MCF 10A (cell line): ENCODE measurements at regions of chr6 and their contacts with region 1.

Region 1: DNA sequence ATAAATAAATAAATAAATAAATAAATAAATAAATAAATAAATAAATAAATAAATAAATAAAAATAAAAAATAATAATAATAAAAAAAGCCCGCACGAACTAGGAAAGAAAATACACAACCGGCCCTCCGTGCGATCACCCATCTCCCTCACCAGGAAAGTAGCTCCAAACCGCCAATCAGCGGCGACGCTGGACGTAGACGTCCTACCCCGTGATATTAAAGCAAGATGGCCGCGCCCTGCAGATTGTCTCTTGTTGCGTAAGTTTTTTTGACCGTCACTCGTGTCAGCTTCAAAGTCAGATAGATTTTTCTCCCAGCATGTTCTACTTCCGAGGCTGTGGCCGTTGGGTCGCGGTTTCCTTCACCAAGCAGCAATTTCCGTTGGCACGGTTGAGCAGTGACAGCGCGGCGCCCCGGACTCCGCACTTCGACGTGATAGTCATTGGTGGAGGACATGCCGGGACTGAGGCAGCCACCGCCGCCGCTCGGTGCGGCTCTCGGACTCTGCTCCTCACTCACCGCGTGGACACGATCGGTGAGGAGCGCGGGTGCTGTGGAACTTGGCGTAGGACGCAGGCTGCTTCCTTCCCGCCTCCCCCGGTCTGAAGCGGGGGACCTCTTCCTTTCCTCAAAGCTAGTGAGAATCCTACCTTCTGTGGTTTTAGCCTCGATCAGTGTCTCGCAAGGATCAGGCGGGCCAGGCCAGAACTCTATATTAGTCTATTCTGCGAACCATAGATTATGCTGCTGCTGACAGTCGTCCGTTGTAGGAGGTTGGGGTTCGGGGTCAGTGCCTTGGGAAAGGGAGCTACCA is at the start of gene MTO1:
- DNase-seq: peak; percentile 94
- H3K4me3 Mint-ChIP-seq: peak within 1 kb of the TSS; percentile 88
- H3K27ac Mint-ChIP-seq: peak within 1 kb of the TSS; percentile 95
- H3K4me1 Mint-ChIP-seq: peaks cover 6% of the 10 kb centered on the region
- H3K27me3 Mint-ChIP-seq: no peaks in the 10 kb centered on the region
- CTCF ChIP-seq: no peak
- total RNA-seq, gene MTO1: 50.8 and 51.4 TPM in 2 replicates

Region 2: GRCh38 chr6:73017476-73017875 is 444.3 kb before region 1 on chr6:
- CTCF ChIA-PET with region 1: no interaction called
- POLR2A ChIA-PET with region 1: no interaction called
- intact Hi-C with region 1: no loop called
- DNase-seq: no peak
- H3K4me3 Mint-ChIP-seq: no peak overlapping the region
- H3K27ac Mint-ChIP-seq: no peak overlapping the region
- H3K4me1 Mint-ChIP-seq: no peaks in the 10 kb centered on the region
- H3K27me3 Mint-ChIP-seq: no peaks in the 10 kb centered on the region
- CTCF ChIP-seq: no peak

Region 3: GRCh38 chr6:73200735-73201134 is 261.0 kb before region 1 on chr6:
- CTCF ChIA-PET with region 1: no interaction called
- POLR2A ChIA-PET with region 1: no interaction called
- intact Hi-C with region 1: no loop called
- DNase-seq: no peak
- H3K4me3 Mint-ChIP-seq: no peak overlapping the region
- H3K27ac Mint-ChIP-seq: no peak overlapping the region
- H3K4me1 Mint-ChIP-seq: peaks cover 6% of the 10 kb centered on the region
- H3K27me3 Mint-ChIP-seq: no peaks in the 10 kb centered on the region
- CTCF ChIP-seq: no peak

Region 4: DNA sequence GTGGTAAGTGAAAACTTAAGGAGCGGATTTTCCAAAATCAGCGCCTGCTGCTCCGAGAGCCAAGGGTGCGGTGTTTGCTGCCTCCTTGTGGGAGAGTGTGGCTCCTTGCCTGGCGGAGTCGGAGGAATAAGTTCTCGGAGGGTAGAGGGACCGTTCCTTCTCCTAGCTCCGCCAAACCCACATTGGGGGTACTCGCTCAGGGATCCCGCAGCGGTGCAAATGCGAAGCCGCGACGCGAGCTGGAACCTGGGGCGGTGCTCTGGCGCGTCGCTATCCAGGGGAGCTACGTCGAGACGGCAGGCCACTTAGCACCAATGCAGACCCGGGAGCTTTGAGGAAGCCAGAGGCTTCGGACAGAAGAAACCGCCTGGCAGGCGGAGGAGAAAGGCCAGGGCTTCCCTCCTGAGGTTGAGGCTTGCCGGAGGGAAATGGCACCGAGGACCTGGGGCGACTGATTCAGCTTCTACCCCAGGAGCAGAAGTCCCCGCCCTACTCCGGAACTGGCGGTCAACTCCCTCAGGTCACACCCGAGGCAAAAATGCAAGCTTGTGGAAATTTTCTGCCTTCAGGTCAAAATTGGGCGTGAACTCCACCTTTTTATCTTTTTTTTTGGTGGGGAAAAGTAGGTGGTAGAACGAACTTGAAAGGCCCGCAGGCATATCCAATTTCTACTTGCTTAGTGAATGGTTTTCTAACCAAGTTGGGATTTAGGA is 72.8 kb before region 1 on chr6:
- CTCF ChIA-PET with region 1: interaction called, 8 read pairs
- POLR2A ChIA-PET with region 1: interaction called, 16 read pairs
- intact Hi-C with region 1: no loop called
- DNase-seq: peak; percentile 74
- H3K4me3 Mint-ChIP-seq: peak overlapping the region; percentile 83
- H3K27ac Mint-ChIP-seq: peak overlapping the region; percentile 51
- H3K4me1 Mint-ChIP-seq: no peaks in the 10 kb centered on the region
- H3K27me3 Mint-ChIP-seq: no peaks in the 10 kb centered on the region
- CTCF ChIP-seq: peak; percentile 77

Region 5: GRCh38 chr6:73471686-73472290 is 10.0 kb after region 1 on chr6:
- CTCF ChIA-PET with region 1: interaction called, 9 read pairs
- POLR2A ChIA-PET with region 1: interaction called, 27 read pairs
- intact Hi-C with region 1: no loop called
- DNase-seq: no peak
- H3K4me3 Mint-ChIP-seq: no peak overlapping the region
- H3K27ac Mint-ChIP-seq: no peak overlapping the region
- H3K4me1 Mint-ChIP-seq: no peaks in the 10 kb centered on the region
- H3K27me3 Mint-ChIP-seq: no peaks in the 10 kb centered on the region
- CTCF ChIP-seq: no peak

Region 6: DNA sequence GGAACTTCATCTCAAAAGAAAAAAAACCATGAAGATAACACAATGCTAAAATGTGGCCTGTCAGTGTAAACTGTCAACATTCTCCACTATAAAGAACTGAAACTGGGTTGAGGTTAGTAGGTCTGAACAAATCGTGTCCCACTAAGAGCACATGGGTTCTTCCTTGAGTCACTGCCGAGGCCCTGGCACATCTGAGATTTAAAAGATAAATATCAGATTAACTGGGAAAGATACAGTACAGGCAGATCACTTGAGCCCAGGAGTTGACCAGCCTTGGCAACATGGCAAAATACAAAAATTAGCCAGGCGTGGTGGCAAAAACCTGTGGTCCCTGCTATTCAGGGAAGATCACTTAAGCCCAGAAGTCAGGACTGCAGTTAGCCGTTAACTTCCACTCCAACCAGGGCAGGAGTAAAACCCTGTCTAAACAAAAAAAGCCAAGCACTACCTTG is 53.5 kb after region 1 on chr6:
- CTCF ChIA-PET with region 1: interaction called, 7 read pairs
- POLR2A ChIA-PET with region 1: interaction called, 53 read pairs
- intact Hi-C with region 1: no loop called
- DNase-seq: peak; percentile 32
- H3K4me3 Mint-ChIP-seq: no peak overlapping the region
- H3K27ac Mint-ChIP-seq: peak overlapping the region; percentile 35
- H3K4me1 Mint-ChIP-seq: peaks cover 12% of the 10 kb centered on the region
- H3K27me3 Mint-ChIP-seq: no peaks in the 10 kb centered on the region
- CTCF ChIP-seq: no peak

Region 7: DNA sequence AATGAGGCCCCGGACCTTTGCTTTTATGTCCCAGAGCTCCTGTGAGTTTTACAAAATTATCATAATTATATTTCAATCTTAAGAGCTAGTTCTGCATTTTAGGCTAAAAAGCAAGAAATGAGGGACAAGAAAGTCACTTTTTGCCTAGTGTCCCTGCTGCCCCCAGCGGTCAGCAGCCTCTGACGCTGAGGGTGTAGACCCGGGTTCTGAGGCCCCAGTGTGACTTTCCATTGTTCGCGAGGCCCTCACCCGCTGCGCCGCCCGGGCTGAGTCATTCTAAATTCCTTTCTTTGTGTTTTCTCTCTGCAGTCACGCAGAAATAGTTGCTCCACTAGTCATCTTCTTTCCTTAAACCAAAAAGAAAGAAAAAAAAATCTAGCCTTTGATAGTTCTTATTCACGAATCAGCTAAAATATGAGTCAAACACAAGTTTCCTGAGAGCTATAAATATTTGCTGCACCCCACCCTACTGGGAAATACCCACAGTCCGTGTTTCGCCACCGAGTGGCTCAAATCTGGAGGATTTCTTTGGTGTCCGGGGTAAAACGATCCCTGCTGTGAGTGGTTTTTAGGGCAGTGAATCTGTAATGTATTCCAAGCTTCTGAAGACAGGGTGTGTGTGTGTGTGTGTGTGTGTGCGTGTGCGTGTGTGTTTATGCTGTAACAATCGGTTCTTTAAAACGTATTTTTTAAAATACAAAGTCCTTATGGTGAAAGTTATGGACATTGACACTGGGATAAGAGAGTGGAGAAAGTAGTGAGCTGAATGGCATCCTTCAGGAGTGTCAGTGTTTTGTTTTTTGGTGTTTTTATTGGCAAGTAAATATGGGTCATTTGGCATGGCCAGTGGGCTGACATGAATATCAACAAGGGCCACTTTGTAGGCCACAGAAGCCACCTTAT is 118.8 kb after region 1 on chr6:
- CTCF ChIA-PET with region 1: no interaction called
- POLR2A ChIA-PET with region 1: interaction called, 10 read pairs
- intact Hi-C with region 1: no loop called
- DNase-seq: peak; percentile 94
- H3K4me3 Mint-ChIP-seq: peak overlapping the region; percentile 81
- H3K27ac Mint-ChIP-seq: peak overlapping the region; percentile 100
- H3K4me1 Mint-ChIP-seq: peaks cover 9% of the 10 kb centered on the region
- H3K27me3 Mint-ChIP-seq: no peaks in the 10 kb centered on the region
- CTCF ChIP-seq: peak; percentile 17

Region 8: DNA sequence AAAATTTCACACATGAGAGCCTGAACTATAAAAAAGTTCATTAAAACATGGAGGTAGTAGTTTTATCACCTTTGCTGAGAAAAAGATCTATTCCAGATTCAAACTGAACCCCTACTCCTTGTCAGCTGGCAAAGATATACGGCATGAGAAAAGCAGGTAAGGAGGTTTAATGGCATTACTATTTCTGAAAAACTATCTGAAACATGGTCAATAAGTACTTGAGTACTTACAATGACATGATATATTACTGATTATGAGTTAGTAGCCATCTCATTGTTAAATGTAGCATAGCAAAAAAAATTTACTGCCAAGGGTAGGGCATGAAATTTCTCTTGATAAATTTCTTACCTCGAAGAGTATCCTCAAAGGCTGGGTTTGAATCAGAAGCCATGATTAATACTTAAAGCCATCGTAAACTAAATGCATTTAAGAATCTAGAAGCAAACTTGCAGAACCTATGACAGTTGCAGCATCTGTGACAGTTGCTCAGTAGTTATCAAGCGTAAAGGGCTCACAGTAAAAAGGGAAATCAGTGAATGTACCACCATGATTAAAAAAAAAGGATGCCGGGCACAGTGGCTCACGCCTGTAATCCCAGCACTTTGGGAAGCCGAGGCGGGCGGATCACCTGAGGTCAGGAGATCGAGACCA is 183.3 kb after region 1 on chr6:
- CTCF ChIA-PET with region 1: no interaction called
- POLR2A ChIA-PET with region 1: interaction called, 14 read pairs
- intact Hi-C with region 1: no loop called
- DNase-seq: no peak
- H3K4me3 Mint-ChIP-seq: peak overlapping the region; percentile 79
- H3K27ac Mint-ChIP-seq: peak overlapping the region; percentile 90
- H3K4me1 Mint-ChIP-seq: peaks cover 34% of the 10 kb centered on the region
- H3K27me3 Mint-ChIP-seq: no peaks in the 10 kb centered on the region
- CTCF ChIP-seq: no peak

Region 9: DNA sequence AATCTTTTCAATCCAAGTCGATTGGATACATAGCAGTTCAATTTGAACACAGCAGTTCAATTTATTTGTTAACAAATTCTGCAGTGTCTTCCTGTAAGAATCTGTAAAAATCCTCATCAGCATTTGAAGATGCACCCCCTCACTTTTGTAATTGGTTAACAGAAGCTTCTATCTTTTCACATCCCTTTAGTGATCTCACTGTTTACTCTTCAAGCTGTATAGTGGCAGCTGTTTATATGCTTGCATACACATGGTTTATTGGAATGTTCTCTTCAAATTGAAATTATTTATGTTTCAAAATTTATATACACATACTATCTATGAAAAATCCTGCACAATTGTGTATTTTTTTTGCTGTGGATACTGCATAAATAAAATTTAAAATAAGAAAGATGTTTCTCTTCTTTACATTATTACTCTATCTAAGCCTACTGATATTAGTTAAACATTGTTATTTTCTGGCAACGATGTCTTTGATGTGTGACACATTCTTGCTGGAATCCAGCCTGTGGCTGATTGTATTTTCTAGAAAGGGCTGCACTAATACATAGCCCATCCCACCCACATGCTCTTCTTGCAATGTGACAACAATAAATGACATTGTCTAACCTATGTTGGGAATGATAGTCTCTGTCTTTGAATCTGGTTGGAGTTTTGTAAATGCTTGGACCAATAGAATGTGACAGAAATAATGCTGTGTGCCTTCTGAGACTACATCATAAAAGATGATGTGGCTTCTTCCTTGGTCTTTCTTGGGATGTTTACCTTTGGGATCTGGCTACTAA is 807.3 kb after region 1 on chr6:
- CTCF ChIA-PET with region 1: no interaction called
- POLR2A ChIA-PET with region 1: no interaction called
- intact Hi-C with region 1: no loop called
- DNase-seq: no peak
- H3K4me3 Mint-ChIP-seq: no peak overlapping the region
- H3K27ac Mint-ChIP-seq: no peak overlapping the region
- H3K4me1 Mint-ChIP-seq: no peaks in the 10 kb centered on the region
- H3K27me3 Mint-ChIP-seq: no peaks in the 10 kb centered on the region
- CTCF ChIP-seq: no peak

Region 10: DNA sequence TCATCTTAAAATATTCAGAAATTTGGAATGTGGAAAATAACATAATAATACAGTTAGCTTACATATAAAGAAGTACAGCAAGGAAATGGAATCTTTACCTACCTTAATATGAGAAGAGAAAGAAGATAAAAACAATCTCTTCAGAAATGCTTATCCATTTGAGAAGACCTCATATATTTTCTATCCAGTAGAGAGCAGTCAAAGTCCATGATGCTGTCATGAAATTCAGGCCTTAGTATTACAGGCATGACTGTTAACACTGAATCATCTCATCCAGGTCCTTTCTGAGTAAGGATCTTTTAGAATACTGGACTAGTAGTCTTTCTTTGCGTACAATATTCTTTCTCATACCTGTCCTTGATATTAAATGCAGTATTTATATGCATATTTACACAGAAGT is 947.7 kb after region 1 on chr6:
- CTCF ChIA-PET with region 1: no interaction called
- POLR2A ChIA-PET with region 1: no interaction called
- intact Hi-C with region 1: no loop called
- DNase-seq: peak; percentile 62
- H3K4me3 Mint-ChIP-seq: no peak overlapping the region
- H3K27ac Mint-ChIP-seq: no peak overlapping the region
- H3K4me1 Mint-ChIP-seq: no peaks in the 10 kb centered on the region
- H3K27me3 Mint-ChIP-seq: no peaks in the 10 kb centered on the region
- CTCF ChIP-seq: peak; percentile 70